Activated CD4-positive, alpha-beta T cell treated with anti-CD3 and anti-CD28 coated beads for 36 hours (primary cell): ENCODE measurements at regions of chr5 and their contacts with region 1.

Region 1: GRCh38 chr5:151252762-151253604 is at the start of gene GM2A:
- DNase-seq: peak; percentile 99
- ATAC-seq: peak; percentile 94
- H3K4me3 Mint-ChIP-seq: peak within 1 kb of the TSS; percentile 85
- H3K27ac Mint-ChIP-seq: peak within 1 kb of the TSS; percentile 90
- H3K4me1 Mint-ChIP-seq: peaks cover 38% of the 10 kb centered on the region
- H3K27me3 Mint-ChIP-seq: no peaks in the 10 kb centered on the region
- total RNA-seq, gene GM2A: 17.2 to 19.3 TPM

Region 2: DNA sequence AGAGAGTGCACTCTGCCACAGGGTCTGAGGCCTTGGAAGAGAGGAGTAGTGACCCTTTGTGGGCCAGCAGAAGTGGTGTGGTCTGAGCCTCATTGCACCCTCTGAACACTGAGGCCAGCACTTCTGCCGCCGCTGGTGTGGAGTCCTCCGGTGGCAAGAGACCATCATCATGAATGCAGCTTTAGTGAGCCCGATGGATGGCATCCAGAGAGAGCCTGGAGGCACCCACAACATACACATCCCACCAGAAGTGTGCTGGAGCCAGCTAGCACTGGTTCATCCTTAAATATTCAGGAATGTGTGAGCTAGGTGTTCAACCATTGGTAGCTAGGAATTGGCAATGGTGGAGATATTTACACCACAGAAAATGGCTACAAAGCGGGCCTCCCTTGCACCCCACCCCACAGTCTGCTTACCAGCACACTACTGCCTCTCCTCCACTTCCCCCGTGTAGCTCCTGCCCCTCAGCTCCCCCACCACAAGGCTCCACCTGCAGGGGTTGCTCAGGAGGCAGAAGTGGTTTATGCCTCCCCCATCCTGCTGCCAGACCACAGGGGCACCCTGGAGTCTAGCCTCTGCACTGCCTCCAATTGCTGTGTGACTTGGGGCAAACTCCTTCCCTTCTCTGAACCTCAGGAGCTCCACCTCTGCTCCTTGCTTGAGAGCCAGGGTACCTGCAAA is 1046.7 kb before region 1 on chr5:
- CTCF ChIA-PET with region 1: no interaction called
- POLR2A ChIA-PET with region 1: no interaction called
- intact Hi-C with region 1: no loop called
- DNase-seq: no peak
- ATAC-seq: no peak
- H3K4me3 Mint-ChIP-seq: no peak overlapping the region
- H3K27ac Mint-ChIP-seq: no peak overlapping the region
- H3K4me1 Mint-ChIP-seq: peaks cover 8% of the 10 kb centered on the region
- H3K27me3 Mint-ChIP-seq: peaks cover 10% of the 10 kb centered on the region

Region 3: DNA sequence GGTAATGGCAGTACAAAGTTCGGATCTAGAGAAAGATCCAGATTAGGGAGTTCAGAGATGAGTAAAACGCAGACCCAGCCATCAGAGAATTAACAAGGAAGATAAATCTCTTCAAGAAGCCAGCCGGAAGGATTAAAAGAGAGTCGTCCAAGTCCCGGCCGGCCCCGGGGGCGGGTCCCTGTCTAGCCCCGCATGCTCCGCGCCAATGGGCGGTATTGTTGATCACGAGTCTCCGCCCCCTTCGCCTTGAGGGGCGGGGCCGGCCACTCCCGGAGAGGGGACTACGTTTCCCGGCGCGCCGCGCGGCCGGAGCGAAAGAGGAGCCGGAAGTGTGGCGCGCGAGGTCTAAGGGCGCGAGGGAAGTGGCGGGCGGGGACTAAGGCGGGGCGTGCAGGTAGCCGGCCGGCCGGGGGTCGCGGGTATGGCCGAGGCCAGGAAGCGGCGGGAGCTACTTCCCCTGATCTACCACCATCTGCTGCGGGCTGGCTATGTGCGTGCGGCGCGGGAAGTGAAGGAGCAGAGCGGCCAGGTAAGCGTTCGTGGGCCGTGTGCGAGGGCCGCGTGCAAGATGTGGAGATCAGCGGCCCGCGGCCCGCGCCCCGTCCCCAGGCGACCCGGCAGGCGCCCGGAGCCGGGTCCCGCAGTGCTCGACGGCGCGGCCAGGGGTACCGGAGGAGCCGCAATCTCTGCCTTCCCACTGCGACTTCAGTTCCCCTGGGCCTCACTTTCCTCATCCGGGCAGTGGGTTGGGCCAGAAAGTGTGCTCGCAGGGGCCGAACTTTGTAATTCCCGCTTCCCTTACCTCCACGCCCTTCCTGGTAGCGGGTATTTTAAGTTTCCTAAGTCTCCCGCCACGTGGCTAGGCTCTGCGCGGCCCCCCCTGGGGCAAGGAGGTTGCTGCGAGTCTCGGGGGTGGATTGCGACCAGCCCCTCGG is 895.4 kb before region 1 on chr5 and contains the start of gene TCOF1:
- CTCF ChIA-PET with region 1: no interaction called
- POLR2A ChIA-PET with region 1: no interaction called
- intact Hi-C with region 1: loop called (anchors 1 to 5 kb)
- DNase-seq: peak; percentile 99
- ATAC-seq: peak; percentile 99
- H3K4me3 Mint-ChIP-seq: peak within 1 kb of the TSS; percentile 87
- H3K27ac Mint-ChIP-seq: peak within 1 kb of the TSS; percentile 90
- H3K4me1 Mint-ChIP-seq: peaks cover 43% of the 10 kb centered on the region
- H3K27me3 Mint-ChIP-seq: no peaks in the 10 kb centered on the region
- total RNA-seq, gene TCOF1: 113 to 145 TPM

Region 4: DNA sequence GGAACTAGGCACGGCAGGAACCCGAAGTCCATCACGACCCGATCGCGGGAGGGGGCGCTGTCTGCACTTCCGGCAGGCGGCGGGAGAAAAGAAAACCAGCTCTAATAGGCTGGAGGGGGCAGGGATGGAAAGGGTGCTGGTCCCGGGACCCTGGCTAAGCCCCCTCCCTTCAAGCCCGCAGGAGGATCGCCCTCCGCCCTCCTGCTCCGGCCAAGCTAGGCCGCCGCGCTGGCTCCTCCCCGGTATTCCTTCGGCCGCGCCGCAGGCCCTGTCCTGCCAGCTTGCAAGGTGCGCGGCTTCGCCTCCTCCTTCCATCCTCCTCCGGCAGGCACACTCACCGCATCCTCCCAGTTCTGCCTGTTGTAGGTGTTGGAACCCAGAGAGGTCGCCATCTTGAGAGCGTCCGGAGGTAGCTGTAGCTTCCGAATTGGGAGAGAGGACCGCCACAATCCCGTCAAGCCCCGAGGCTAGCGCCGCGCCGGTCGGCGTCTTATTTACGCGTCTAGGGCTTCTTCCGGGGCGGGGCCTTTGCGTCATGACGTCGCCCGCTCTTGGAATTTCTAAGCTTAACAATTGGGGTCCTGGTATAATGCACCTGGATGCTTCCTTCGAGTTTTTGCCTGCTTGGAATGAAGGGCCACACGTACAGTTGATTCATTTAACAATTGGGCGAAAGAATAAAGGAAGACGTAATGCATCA is 552.2 kb before region 1 on chr5 and contains the start of gene RBM22:
- CTCF ChIA-PET with region 1: no interaction called
- POLR2A ChIA-PET with region 1: no interaction called
- intact Hi-C with region 1: loop called in 1 of 2 experiments (anchors 1 kb)
- DNase-seq: peak; percentile 95
- ATAC-seq: peak; percentile 95
- H3K4me3 Mint-ChIP-seq: no peak within 1 kb of the TSS
- H3K27ac Mint-ChIP-seq: no peak within 1 kb of the TSS
- H3K4me1 Mint-ChIP-seq: peaks cover 15% of the 10 kb centered on the region
- H3K27me3 Mint-ChIP-seq: no peaks in the 10 kb centered on the region
- total RNA-seq, gene RBM22: 59.9 to 61.8 TPM

Region 5: GRCh38 chr5:151150471-151151262 is 102.3 kb before region 1 on chr5:
- CTCF ChIA-PET with region 1: no interaction called
- POLR2A ChIA-PET with region 1: no interaction called
- intact Hi-C with region 1: loop called (anchors 1 to 5 kb)
- DNase-seq: peak; percentile 87
- ATAC-seq: peak; percentile 64
- H3K4me3 Mint-ChIP-seq: peak overlapping the region; percentile 46
- H3K27ac Mint-ChIP-seq: peak overlapping the region; percentile 89
- H3K4me1 Mint-ChIP-seq: peaks cover 94% of the 10 kb centered on the region
- H3K27me3 Mint-ChIP-seq: no peaks in the 10 kb centered on the region

Region 6: DNA sequence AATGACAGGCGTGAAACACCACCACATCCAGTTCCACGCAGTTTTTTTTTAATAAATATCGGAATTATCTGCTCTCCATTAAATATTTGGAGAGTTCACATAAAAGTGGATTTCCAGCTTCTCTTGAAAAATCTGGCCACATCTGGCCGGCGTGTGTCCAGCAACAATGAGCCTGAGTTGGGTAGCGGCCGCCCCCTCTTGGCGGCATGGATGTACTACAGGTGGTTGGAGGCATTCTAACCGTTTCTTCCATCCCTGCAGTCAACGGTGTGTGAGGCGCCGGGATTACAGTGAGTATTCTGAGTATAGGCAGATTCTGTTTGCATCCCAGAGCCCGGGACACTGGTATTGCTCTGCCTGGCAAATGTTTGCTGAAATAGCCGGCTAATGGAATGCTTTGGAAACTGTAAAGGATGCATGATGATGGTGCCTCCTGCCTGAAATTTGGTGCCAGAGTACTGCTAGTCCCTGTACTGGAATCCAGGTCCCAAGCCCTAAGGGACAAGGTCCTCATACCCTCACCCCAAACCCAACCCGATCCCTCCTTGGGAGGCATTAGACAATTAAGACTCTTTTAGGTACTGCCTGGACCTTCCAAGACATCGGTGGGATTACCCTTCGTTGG is 13.6 kb before region 1 on chr5:
- CTCF ChIA-PET with region 1: interaction called, 13 read pairs
- POLR2A ChIA-PET with region 1: interaction called, 4 read pairs
- intact Hi-C with region 1: no loop called
- DNase-seq: peak; percentile 82
- ATAC-seq: peak; percentile 71
- H3K4me3 Mint-ChIP-seq: no peak overlapping the region
- H3K27ac Mint-ChIP-seq: no peak overlapping the region
- H3K4me1 Mint-ChIP-seq: peaks cover 29% of the 10 kb centered on the region
- H3K27me3 Mint-ChIP-seq: no peaks in the 10 kb centered on the region

Region 7: DNA sequence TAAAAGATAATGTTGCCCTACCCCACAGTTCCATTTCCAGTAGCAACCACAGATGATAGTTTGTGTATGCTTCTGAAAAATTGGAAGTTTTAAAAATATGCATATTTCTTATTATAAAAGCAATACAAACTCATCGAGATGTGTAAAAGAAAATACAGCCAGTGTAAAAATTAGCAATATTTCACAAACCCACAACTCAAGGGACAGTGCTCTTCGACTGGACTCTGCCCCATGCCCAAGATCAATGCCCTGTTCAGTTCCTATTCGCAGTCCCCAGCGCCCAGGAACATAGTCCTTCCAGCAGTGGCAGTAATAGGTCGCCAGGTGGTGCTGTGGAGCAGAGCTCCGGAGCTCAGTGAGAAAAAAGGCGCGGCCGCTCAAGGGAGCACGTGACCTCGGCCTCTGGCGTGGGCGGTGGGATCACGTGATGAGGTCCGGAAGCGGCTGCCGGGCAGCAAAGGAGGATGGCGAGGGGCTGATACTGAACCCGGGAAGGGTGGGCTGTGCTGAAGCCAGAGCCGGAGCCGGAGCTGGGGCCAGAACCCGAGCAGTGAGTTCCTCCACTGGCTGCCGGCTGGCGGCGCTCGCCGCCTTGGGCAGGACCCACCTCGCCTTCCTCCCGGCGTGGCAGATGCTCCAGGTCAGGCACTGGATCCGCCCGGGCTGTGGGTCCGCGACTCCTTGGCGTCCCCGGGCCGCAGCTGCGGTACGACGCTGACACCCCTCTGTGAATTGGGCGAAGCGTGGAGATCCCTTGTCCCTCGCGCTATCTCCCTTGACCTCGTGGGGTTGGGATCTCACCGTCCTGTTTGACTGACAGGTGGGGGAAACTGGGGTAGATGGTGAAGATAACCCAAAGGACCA is 194.4 kb after region 1 on chr5 and contains the start of gene SLC36A1:
- CTCF ChIA-PET with region 1: no interaction called
- POLR2A ChIA-PET with region 1: no interaction called
- intact Hi-C with region 1: loop called in 1 of 2 experiments (anchors 1 kb)
- DNase-seq: peak; percentile 98
- ATAC-seq: peak; percentile 94
- H3K4me3 Mint-ChIP-seq: peak within 1 kb of the TSS; percentile 93
- H3K27ac Mint-ChIP-seq: peak within 1 kb of the TSS; percentile 88
- H3K4me1 Mint-ChIP-seq: peaks cover 22% of the 10 kb centered on the region
- H3K27me3 Mint-ChIP-seq: peaks cover 12% of the 10 kb centered on the region
- total RNA-seq, gene SLC36A1: 3.4 to 4.4 TPM